ENCODE measurements at regions of chr7 and their contacts with region 1.

Region 1: GRCh38 chr7:22726345-22727185 is 435 bp upstream of the IL6 start:
- DNase-seq: peak; percentile 84
- ATAC-seq: peak; percentile 73
- H3K4me3 ChIP-seq: peak overlapping the region in 4 of 5 experiments; percentile 58 to 70 (median 66)
- H3K4me3 Mint-ChIP-seq: peak overlapping the region; percentile 80
- H3K27ac ChIP-seq: peak overlapping the region; percentile 90 to 94
- H3K27ac Mint-ChIP-seq: peak overlapping the region; percentile 90
- H3K4me1 ChIP-seq: peaks cover 77 to 79% of the 10 kb centered on the region in 2 donors
- H3K4me1 Mint-ChIP-seq: peaks cover 80% of the 10 kb centered on the region
- H3K27me3 ChIP-seq: no peaks in the 10 kb centered on the region
- H3K27me3 Mint-ChIP-seq: no peaks in the 10 kb centered on the region
- CTCF ChIP-seq: peak; percentile 78

Region 2: GRCh38 chr7:22565315-22565811 is 161.2 kb before region 1 on chr7:
- CTCF ChIA-PET with region 1: interaction called, 712 read pairs
- POLR2A ChIA-PET with region 1: interaction called, 15 read pairs
- intact Hi-C with region 1: loop called (anchors 1 kb)
- DNase-seq: peak; percentile 74
- ATAC-seq: peak; percentile 66
- H3K4me3 ChIP-seq: no peak overlapping the region
- H3K4me3 Mint-ChIP-seq: peak overlapping the region; percentile 51
- H3K27ac ChIP-seq: peak overlapping the region; percentile 27 to 65
- H3K27ac Mint-ChIP-seq: peak overlapping the region; percentile 79
- H3K4me1 ChIP-seq: peaks cover 57 to 66% of the 10 kb centered on the region in 2 donors
- H3K4me1 Mint-ChIP-seq: peaks cover 67% of the 10 kb centered on the region
- H3K27me3 ChIP-seq: no peaks in the 10 kb centered on the region
- H3K27me3 Mint-ChIP-seq: no peaks in the 10 kb centered on the region
- CTCF ChIP-seq: no peak

Region 3: DNA sequence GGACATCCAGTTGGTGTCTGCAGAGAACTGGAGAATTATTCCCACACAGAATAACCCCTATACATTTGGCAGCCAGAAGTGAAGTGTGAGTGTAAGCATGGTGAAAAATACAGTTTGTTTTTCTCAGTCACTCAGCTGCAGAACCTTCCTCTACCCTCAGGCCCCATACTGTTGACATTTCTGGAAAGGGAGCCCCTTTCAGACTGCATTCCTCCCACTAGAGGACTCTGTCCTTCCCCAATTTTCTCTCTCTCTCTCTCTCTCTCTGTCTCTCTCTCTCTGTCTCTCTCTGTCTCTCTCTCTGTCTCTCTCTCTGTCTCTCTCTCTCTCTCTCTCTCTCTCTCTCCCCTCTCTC is 139.8 kb before region 1 on chr7:
- CTCF ChIA-PET with region 1: interaction called, 13 read pairs
- POLR2A ChIA-PET with region 1: no interaction called
- intact Hi-C with region 1: no loop called
- DNase-seq: no peak
- ATAC-seq: no peak
- H3K4me3 ChIP-seq: no peak overlapping the region
- H3K4me3 Mint-ChIP-seq: no peak overlapping the region
- H3K27ac ChIP-seq: peak overlapping the region in 1 of 2 donors; percentile 1
- H3K27ac Mint-ChIP-seq: no peak overlapping the region
- H3K4me1 ChIP-seq: peaks cover 47 to 50% of the 10 kb centered on the region in 2 donors
- H3K4me1 Mint-ChIP-seq: peaks cover 54% of the 10 kb centered on the region
- H3K27me3 ChIP-seq: no peaks in the 10 kb centered on the region
- H3K27me3 Mint-ChIP-seq: no peaks in the 10 kb centered on the region
- CTCF ChIP-seq: no peak

Region 4: DNA sequence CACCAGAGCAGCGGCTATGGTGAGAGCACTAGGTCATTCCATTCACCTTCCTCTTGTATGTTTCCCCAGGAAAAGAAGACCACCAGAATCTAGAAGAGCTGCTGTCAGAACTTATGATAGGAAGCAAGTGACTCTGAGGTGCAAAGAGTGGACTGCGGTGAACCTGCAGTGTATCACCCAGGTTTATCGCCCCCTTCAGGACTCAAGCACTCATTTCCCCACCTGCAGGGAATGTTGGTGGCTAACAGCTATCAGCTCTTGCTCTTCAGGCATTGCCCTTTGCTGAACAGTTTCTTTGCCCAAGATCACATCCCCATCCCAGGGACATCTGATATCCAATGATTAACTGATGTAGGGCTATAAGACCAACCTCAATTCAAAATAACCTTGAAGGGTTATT is 65.8 kb before region 1 on chr7:
- CTCF ChIA-PET with region 1: interaction called, 209 read pairs
- POLR2A ChIA-PET with region 1: interaction called, 6 read pairs
- intact Hi-C with region 1: loop called (anchors 1 kb)
- DNase-seq: peak; percentile 56
- ATAC-seq: no peak
- H3K4me3 ChIP-seq: peak overlapping the region; percentile 38 to 56 (median 44)
- H3K4me3 Mint-ChIP-seq: peak overlapping the region; percentile 71
- H3K27ac ChIP-seq: peak overlapping the region; percentile 99 to 100
- H3K27ac Mint-ChIP-seq: peak overlapping the region; percentile 92
- H3K4me1 ChIP-seq: peaks cover 79 to 84% of the 10 kb centered on the region in 2 donors
- H3K4me1 Mint-ChIP-seq: peaks cover 78% of the 10 kb centered on the region
- H3K27me3 ChIP-seq: no peaks in the 10 kb centered on the region
- H3K27me3 Mint-ChIP-seq: no peaks in the 10 kb centered on the region
- CTCF ChIP-seq: peak; percentile 51

Region 5: GRCh38 chr7:22697876-22698606 is 28.5 kb before region 1 on chr7:
- CTCF ChIA-PET with region 1: interaction called, 106 read pairs
- POLR2A ChIA-PET with region 1: interaction called, 3 read pairs
- intact Hi-C with region 1: loop called (anchors 1 kb)
- DNase-seq: peak; percentile 87
- ATAC-seq: peak; percentile 70
- H3K4me3 ChIP-seq: peak overlapping the region in 1 of 5 experiments; percentile 40
- H3K4me3 Mint-ChIP-seq: peak overlapping the region; percentile 37
- H3K27ac ChIP-seq: peak overlapping the region; percentile 87 to 91
- H3K27ac Mint-ChIP-seq: peak overlapping the region; percentile 84
- H3K4me1 ChIP-seq: peaks cover 84 to 91% of the 10 kb centered on the region in 2 donors
- H3K4me1 Mint-ChIP-seq: peaks cover 86% of the 10 kb centered on the region
- H3K27me3 ChIP-seq: no peaks in the 10 kb centered on the region
- H3K27me3 Mint-ChIP-seq: no peaks in the 10 kb centered on the region
- CTCF ChIP-seq: no peak

Region 6: DNA sequence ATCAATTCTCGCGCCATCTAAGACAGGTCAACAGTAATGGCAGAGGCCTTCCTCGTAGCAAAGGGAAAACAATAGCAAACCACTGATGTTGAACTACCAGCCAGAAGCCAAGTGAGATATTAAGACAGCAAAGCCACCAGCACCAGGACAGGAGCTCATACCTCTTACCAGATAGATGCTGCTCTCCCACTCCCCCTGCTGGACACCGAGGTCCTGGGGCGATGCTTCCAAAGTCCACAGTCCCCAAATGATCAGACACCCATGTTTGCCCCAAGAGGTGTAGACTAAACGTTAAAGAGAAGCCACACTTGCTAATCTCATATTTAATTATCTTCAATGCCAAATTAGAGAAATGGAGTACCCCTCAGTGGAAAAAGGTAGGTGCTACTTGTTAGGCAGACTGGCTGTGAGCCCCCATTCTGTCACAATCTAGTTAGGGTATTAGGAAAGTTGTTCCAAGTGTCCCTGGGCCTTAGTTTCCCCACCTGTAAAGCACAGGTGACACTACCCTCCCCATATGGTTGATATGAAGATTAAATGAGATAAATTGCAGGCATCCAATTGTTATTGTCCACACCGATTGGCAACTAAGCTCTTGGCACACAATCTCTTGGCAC is 56.2 kb after region 1 on chr7:
- CTCF ChIA-PET with region 1: interaction called, 104 read pairs
- POLR2A ChIA-PET with region 1: no interaction called
- intact Hi-C with region 1: loop called (anchors 2 kb)
- DNase-seq: peak; percentile 84
- ATAC-seq: peak; percentile 96
- H3K4me3 ChIP-seq: no peak overlapping the region
- H3K4me3 Mint-ChIP-seq: no peak overlapping the region
- H3K27ac ChIP-seq: no peak overlapping the region
- H3K27ac Mint-ChIP-seq: no peak overlapping the region
- H3K4me1 ChIP-seq: no peaks in the 10 kb centered on the region
- H3K4me1 Mint-ChIP-seq: peaks cover 3% of the 10 kb centered on the region
- H3K27me3 ChIP-seq: no peaks in the 10 kb centered on the region
- H3K27me3 Mint-ChIP-seq: no peaks in the 10 kb centered on the region
- CTCF ChIP-seq: peak; percentile 87

Region 7: DNA sequence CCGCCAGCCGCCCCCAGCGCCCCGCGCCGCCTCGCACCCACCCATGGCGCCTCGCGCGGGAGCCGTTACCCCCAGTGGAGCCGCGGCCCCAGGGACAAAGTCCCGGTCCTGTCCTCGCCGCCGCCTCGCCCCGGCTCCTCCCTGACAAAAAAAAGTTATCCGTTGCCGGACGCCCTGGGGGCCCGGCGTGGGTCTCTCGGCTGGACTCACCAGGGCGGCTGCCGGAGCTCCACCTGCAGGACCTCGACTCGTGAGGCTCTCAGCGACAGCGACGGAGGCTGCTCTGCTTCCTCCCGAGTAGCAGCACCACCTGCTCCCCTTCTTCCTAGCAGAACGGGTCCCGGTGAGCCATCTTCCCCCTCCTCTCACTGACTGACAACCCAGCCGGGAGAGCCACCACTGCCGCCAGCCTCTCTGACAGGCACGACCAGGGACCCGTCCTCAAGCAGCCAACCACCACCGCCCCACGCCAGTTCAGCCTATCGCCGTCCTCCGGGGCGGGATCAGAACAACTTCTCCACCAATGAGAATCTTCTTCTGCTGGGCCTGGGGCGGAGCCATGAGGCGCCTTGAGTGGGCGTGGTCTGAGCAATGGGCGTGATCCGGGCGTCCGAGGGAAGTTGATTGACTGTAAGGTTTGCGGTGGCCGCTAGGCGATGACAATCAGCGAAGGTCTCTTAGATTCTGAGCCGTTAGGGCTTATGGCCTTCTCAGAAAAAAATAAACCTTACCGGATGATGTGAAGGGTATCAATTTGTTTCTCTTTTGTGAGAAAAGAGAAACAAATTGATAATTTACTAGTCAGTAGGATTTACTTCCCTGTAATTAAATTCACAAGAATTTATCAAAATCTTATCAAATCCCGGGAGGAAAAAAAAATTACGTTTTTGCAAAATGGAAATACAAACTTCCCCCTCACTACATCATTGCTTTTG is 287.4 kb after region 1 on chr7 and contains the start of gene HYCC1:
- CTCF ChIA-PET with region 1: interaction called, 3 read pairs
- POLR2A ChIA-PET with region 1: no interaction called
- intact Hi-C with region 1: loop called (anchors 5 kb)
- DNase-seq: peak; percentile 99
- ATAC-seq: peak; percentile 96
- H3K4me3 ChIP-seq: peak within 1 kb of the TSS; percentile 68 to 85 (median 80)
- H3K4me3 Mint-ChIP-seq: peak within 1 kb of the TSS; percentile 99
- H3K27ac ChIP-seq: peak within 1 kb of the TSS; percentile 63 to 70
- H3K27ac Mint-ChIP-seq: peak within 1 kb of the TSS; percentile 98
- H3K4me1 ChIP-seq: peaks cover 73 to 74% of the 10 kb centered on the region in 2 donors
- H3K4me1 Mint-ChIP-seq: peaks cover 42% of the 10 kb centered on the region
- H3K27me3 ChIP-seq: no peaks in the 10 kb centered on the region
- H3K27me3 Mint-ChIP-seq: no peaks in the 10 kb centered on the region
- CTCF ChIP-seq: peak; percentile 72
- total RNA-seq, gene HYCC1: 39.6 and 40.8 TPM in 2 replicates